OCI-LY7 (cell line): ENCODE measurements at regions of chr1 and their contacts with region 1.

Region 1: GRCh38 chr1:13730751-13731482 is 30.9 kb downstream of the PRDM2 start:
- DNase-seq: peak; percentile 97
- H3K4me3 ChIP-seq: peak overlapping the region; percentile 64
- H3K27ac ChIP-seq: peak overlapping the region; percentile 99
- H3K4me1 ChIP-seq: peaks cover 95% of the 10 kb centered on the region
- CTCF ChIP-seq: 0 out of 2 replicates have a peak, but pooled peaks have one; percentile 24

Region 2: DNA sequence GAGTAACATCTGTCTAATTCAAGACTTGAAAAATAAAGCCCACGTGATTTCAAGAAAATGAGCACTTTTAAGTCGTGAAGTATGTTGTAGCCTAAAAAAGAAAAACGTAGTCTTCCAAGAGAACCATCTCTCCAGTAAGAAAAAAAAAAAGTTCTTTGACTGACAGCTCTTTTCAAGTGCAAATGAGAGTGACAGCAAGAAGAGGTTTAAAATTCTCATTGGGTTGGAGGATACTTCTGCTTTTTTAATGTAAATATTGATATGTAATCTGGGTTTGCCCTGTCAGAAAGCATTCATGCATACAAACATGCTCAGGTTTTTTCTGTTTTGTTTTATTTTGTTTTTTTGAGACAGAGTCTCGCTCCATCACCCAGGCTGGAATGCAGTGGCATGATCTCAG is 63.2 kb before region 1 on chr1:
- CTCF ChIA-PET with region 1: interaction called, 8 read pairs
- POLR2A ChIA-PET with region 1: interaction called, 6 read pairs
- intact Hi-C with region 1: loop called (anchors 1 kb)
- DNase-seq: peak; percentile 79
- H3K4me3 ChIP-seq: peak overlapping the region; percentile 15
- H3K27ac ChIP-seq: peak overlapping the region; percentile 46
- H3K4me1 ChIP-seq: peaks cover 48% of the 10 kb centered on the region
- CTCF ChIP-seq: no peak

Region 3: GRCh38 chr1:13699936-13700520 is 30.9 kb before region 1 on chr1 and contains the start of gene PRDM2:
- CTCF ChIA-PET with region 1: interaction called, 8 read pairs
- POLR2A ChIA-PET with region 1: interaction called, 43 read pairs
- intact Hi-C with region 1: loop called (anchors 1 kb)
- DNase-seq: peak; percentile 70
- H3K4me3 ChIP-seq: peak within 1 kb of the TSS; percentile 84
- H3K27ac ChIP-seq: peak within 1 kb of the TSS; percentile 91
- H3K4me1 ChIP-seq: peaks cover 45% of the 10 kb centered on the region
- CTCF ChIP-seq: no peak
- total RNA-seq, gene PRDM2: 38.7 and 47.6 TPM in 2 replicates

Region 4: DNA sequence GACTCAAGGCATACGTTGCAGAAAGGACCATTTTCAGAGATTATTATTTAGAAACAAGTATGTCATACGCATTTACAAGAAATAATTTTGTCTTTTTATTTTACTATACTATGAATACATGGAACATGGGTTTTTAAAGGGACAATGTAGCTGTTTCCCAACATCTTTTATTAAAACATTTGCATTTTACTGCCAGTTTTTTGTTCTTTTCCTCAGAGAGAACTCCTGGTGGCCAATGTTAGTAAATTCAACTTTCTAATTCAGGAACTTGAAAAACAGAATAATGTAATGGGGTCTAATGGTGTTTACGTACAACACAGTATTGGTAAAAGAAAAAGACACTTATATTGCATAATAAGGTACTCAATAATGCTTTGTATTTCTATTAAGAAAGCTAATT is 16.1 kb before region 1 on chr1:
- CTCF ChIA-PET with region 1: interaction called, 4 read pairs
- POLR2A ChIA-PET with region 1: interaction called, 14 read pairs
- intact Hi-C with region 1: no loop called
- DNase-seq: no peak
- H3K4me3 ChIP-seq: no peak overlapping the region
- H3K27ac ChIP-seq: no peak overlapping the region
- H3K4me1 ChIP-seq: peaks cover 38% of the 10 kb centered on the region
- CTCF ChIP-seq: peak; percentile 56

Region 5: DNA sequence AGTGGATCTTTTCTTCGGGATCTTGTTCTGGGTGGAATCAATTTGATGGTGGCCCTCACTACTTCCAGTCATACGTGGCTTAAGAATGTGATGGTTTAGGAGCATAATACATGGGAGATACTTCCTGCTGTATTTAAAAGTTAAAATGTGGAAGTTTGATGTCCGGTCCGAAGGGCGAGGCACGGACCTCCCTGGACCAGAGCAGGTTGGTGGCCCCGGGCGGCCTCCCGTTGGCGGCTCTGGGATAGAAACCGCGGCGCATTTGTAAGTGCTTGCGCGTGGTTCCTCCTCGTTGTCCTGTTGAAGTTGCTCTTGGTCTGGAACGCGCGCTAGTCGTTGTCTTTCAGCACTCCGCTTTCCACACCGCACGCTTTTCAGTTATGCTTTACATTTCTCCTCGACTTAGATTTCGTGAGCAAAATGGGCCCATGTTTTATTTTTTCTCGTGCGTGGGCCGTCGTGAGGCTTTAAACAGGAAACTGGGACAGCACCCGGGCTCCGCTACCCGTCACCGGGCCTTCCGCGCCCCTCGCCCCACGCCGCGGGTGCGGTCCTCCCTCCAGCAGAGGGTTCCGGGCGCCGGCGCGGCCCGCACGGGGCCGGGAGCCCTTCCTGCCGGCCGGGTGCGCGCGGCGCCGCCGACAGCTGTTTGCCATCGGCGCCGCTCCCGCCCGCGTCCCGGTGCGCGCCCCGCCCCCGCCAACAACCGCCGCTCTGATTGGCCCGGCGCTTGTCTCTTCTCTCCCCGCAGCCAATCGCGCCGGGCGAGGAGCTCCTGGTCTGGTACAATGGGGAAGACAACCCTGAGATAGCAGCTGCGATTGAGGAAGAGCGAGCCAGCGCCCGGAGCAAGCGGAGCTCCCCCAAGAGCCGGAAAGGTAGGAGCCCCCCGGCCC is 17.9 kb after region 1 on chr1:
- CTCF ChIA-PET with region 1: interaction called, 3 read pairs
- POLR2A ChIA-PET with region 1: interaction called, 35 read pairs
- intact Hi-C with region 1: loop called (anchors 1 kb)
- DNase-seq: peak; percentile 96
- H3K4me3 ChIP-seq: peak overlapping the region; percentile 96
- H3K27ac ChIP-seq: peak overlapping the region; percentile 65
- H3K4me1 ChIP-seq: peaks cover 45% of the 10 kb centered on the region
- CTCF ChIP-seq: 0 out of 2 replicates have a peak, but pooled peaks have one; percentile 35

Region 6: GRCh38 chr1:13797397-13797796 is 66.5 kb after region 1 on chr1:
- CTCF ChIA-PET with region 1: no interaction called
- POLR2A ChIA-PET with region 1: no interaction called
- intact Hi-C with region 1: loop called (anchors 5 kb)
- DNase-seq: peak; percentile 81
- H3K4me3 ChIP-seq: peak overlapping the region; percentile 34
- H3K27ac ChIP-seq: peak overlapping the region; percentile 77
- H3K4me1 ChIP-seq: peaks cover 38% of the 10 kb centered on the region
- CTCF ChIP-seq: no peak